GM12878 (cell line): ENCODE measurements at regions of chr7 and their contacts with region 1.

Region 1: DNA sequence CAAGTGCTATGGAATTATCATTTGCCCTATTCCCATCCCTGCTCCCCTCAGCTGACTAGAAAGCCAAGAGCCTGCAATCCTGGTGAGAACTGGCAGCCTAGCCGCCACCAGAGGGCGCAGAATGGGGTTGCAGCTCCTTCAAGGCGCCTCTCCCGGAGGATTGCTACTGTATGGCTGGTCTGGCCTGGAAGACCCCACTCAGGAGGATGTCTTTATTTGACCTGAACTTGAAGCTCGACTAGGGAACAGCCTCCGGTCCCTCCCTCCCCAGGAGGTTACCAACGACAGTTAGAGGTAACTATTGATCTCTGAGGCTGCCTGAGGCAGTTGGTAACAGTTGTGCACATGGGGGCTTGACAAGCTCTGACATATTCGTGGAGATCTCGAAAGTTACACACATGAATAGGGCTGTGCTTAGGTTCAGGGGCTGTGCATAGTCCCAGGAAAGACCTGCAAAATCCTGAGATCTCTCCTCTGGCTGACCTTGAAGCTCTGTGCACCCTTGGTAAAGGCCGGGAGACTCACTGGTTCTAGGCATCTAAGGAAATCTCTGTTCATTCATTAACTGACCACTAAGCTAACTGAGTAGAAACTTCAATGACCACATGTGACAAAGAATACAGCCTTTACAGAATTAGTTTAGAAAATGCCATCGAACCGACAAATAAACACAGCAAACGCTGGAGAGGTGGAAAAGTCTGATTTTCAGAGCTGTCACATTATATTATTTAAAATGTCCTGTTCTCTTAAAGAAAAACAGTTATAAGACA is 65.7 kb downstream of the TSPAN12 start:
- DNase-seq: peak; percentile 24
- ATAC-seq: peak; percentile 96
- H3K4me3 ChIP-seq: no peak overlapping the region
- H3K27ac ChIP-seq: no peak overlapping the region
- H3K4me1 ChIP-seq: no peaks in the 10 kb centered on the region
- H3K27me3 ChIP-seq: no peaks in the 10 kb centered on the region
- CTCF ChIP-seq: peak; percentile 84 to 97 (median 95)
- EP300 ChIP-seq: no peak
- POLR2A ChIP-seq: no peak
- RAD21 ChIP-seq: peak; percentile 70

Region 2: DNA sequence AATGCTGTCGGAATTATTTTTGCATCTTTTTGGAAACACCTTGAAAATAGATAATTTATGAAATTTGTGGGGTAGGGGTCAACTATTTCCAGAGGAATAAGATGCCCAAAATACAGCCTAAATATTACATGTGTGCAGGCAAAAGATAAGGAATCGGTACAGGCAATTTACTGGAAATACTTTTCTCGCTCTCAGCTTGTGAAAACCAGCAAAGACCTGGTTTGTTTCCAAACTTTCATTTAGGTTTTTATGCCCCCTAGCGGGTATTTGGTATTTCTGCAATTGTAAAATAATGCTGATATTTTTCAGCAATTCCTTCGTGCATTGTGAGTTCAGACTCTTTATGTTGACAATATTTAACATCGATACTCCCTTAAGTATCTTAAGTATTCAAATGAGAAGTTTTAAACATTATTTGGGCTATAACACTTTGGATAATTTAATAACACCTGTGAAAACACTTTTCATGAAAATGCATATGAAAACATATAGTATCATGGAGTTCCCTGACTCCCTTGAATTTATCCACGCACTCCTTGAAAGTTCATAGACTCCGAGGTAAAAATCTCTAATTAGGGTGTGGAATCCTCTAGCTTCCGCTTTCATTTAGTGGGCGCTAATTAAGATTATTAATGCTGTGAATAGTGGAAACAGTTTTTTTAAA is 66.8 kb before region 1 on chr7:
- CTCF ChIA-PET with region 1: interaction called, 11 read pairs
- POLR2A ChIA-PET with region 1: no interaction called
- RAD21 ChIA-PET with region 1: no interaction called
- SMC1A ChIA-PET with region 1: interaction called, 4 read pairs
- in situ Hi-C with region 1: no loop called
- intact Hi-C with region 1: no loop called
- DNase-seq: no peak
- ATAC-seq: peak; percentile 54
- H3K4me3 ChIP-seq: no peak overlapping the region
- H3K27ac ChIP-seq: no peak overlapping the region
- H3K4me1 ChIP-seq: no peaks in the 10 kb centered on the region; the same call in 1 of the 2 replicates
- H3K27me3 ChIP-seq: no peaks in the 10 kb centered on the region
- CTCF ChIP-seq: peak; percentile 54 to 59 (median 55); a peak in 5 of 6 replicates
- EP300 ChIP-seq: no peak
- POLR2A ChIP-seq: no peak
- RAD21 ChIP-seq: peak; percentile 87

Region 3: GRCh38 chr7:120819863-120820262 is 27.6 kb after region 1 on chr7:
- CTCF ChIA-PET with region 1: interaction called, 10 read pairs
- POLR2A ChIA-PET with region 1: no interaction called
- RAD21 ChIA-PET with region 1: interaction called, 3 read pairs
- SMC1A ChIA-PET with region 1: interaction called, 8 read pairs
- in situ Hi-C with region 1: no loop called
- intact Hi-C with region 1: no loop called
- DNase-seq: no peak
- ATAC-seq: peak; percentile 68
- H3K4me3 ChIP-seq: no peak overlapping the region
- H3K27ac ChIP-seq: no peak overlapping the region
- H3K4me1 ChIP-seq: no peaks in the 10 kb centered on the region
- H3K27me3 ChIP-seq: no peaks in the 10 kb centered on the region
- CTCF ChIP-seq: peak in 1 of 3 experiments; percentile 58; a peak in 2 of 6 replicates
- EP300 ChIP-seq: no peak
- POLR2A ChIP-seq: no peak
- RAD21 ChIP-seq: peak; percentile 37; the same call in 1 of the 2 replicates

Region 4: GRCh38 chr7:120867932-120868331 is 75.7 kb after region 1 on chr7:
- CTCF ChIA-PET with region 1: interaction called, 18 read pairs
- POLR2A ChIA-PET with region 1: no interaction called
- RAD21 ChIA-PET with region 1: interaction called, 7 read pairs
- SMC1A ChIA-PET with region 1: interaction called, 7 read pairs
- in situ Hi-C with region 1: no loop called
- intact Hi-C with region 1: no loop called
- DNase-seq: no peak
- ATAC-seq: peak; percentile 91
- H3K4me3 ChIP-seq: no peak overlapping the region
- H3K27ac ChIP-seq: no peak overlapping the region
- H3K4me1 ChIP-seq: peaks cover 17% of the 10 kb centered on the region
- H3K27me3 ChIP-seq: no peaks in the 10 kb centered on the region
- CTCF ChIP-seq: no peak
- EP300 ChIP-seq: 0 out of 4 replicates have a peak, but pooled peaks of 1 of the 2 experiments have one; percentile 52
- POLR2A ChIP-seq: no peak
- RAD21 ChIP-seq: no peak

Region 5: DNA sequence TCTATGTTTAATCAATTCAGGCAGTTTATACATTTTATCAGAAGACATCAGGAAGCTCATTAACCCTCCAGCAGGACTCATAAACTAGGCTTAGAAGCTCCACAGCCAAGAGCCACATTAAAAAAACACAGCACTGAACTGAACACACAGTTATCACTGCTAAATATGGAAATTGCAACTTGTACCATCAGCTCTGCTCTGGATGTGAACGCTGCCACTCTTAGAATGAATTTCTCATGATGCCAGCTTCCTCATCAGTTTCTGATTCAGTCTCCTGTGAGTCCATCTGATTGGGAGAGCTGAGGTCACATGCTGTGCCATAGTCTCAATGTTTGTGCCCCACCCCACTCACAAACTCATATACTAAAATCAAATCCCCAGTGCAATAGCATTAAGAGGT is 141.2 kb after region 1 on chr7:
- CTCF ChIA-PET with region 1: interaction called, 21 read pairs
- POLR2A ChIA-PET with region 1: interaction called, 3 read pairs
- RAD21 ChIA-PET with region 1: interaction called, 7 read pairs
- SMC1A ChIA-PET with region 1: interaction called, 17 read pairs
- in situ Hi-C with region 1: loop called (anchors 5 kb)
- intact Hi-C with region 1: no loop called
- DNase-seq: no peak
- ATAC-seq: peak; percentile 80
- H3K4me3 ChIP-seq: no peak overlapping the region
- H3K27ac ChIP-seq: no peak overlapping the region
- H3K4me1 ChIP-seq: no peaks in the 10 kb centered on the region
- H3K27me3 ChIP-seq: no peaks in the 10 kb centered on the region
- CTCF ChIP-seq: no peak
- EP300 ChIP-seq: no peak
- POLR2A ChIP-seq: no peak
- RAD21 ChIP-seq: no peak

Region 6: DNA sequence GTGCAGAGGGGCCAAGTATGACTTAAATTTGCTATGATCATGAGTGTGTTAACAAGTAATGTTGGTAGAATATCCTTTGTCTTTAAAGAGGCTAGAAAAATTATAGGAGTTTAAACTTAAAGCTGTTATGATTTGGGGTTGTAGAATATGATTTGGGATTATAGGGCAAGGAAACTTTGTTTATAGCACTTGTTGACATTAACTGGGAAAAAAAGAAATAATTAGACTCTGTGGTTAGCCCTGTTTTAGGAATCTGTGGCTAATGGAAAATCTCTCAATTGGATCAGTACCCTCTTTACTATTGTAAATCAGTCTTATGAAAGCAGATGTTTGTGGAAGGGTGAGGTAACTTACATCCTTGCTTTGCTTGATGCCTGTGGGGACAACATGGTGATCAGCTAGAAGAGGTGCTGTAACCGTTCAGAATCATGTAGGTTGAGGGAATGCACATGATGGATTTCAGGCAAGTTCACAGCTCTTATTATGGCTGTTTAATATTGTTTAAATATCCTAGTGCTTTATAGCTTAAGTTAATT is 169.4 kb after region 1 on chr7:
- CTCF ChIA-PET with region 1: interaction called, 13 read pairs
- POLR2A ChIA-PET with region 1: no interaction called
- RAD21 ChIA-PET with region 1: interaction called, 3 read pairs
- SMC1A ChIA-PET with region 1: interaction called, 4 read pairs
- in situ Hi-C with region 1: no loop called
- intact Hi-C with region 1: no loop called
- DNase-seq: no peak
- ATAC-seq: peak; percentile 43; the same call in 2 of the 3 replicates
- H3K4me3 ChIP-seq: no peak overlapping the region
- H3K27ac ChIP-seq: no peak overlapping the region
- H3K4me1 ChIP-seq: no peaks in the 10 kb centered on the region
- H3K27me3 ChIP-seq: no peaks in the 10 kb centered on the region
- CTCF ChIP-seq: no peak
- EP300 ChIP-seq: no peak
- POLR2A ChIP-seq: no peak
- RAD21 ChIP-seq: no peak

Region 7: GRCh38 chr7:121107923-121108498 is 315.7 kb after region 1 on chr7:
- CTCF ChIA-PET with region 1: interaction called, 11 read pairs
- POLR2A ChIA-PET with region 1: no interaction called
- RAD21 ChIA-PET with region 1: interaction called, 5 read pairs
- SMC1A ChIA-PET with region 1: interaction called, 5 read pairs
- in situ Hi-C with region 1: no loop called
- intact Hi-C with region 1: no loop called
- DNase-seq: peak; percentile 11
- ATAC-seq: peak; percentile 96
- H3K4me3 ChIP-seq: no peak overlapping the region
- H3K27ac ChIP-seq: no peak overlapping the region
- H3K4me1 ChIP-seq: no peaks in the 10 kb centered on the region
- H3K27me3 ChIP-seq: no peaks in the 10 kb centered on the region; a peak in 2 of 4 replicates
- CTCF ChIP-seq: peak; percentile 65 to 76 (median 74)
- EP300 ChIP-seq: no peak
- POLR2A ChIP-seq: no peak
- RAD21 ChIP-seq: peak; percentile 74

Region 8: DNA sequence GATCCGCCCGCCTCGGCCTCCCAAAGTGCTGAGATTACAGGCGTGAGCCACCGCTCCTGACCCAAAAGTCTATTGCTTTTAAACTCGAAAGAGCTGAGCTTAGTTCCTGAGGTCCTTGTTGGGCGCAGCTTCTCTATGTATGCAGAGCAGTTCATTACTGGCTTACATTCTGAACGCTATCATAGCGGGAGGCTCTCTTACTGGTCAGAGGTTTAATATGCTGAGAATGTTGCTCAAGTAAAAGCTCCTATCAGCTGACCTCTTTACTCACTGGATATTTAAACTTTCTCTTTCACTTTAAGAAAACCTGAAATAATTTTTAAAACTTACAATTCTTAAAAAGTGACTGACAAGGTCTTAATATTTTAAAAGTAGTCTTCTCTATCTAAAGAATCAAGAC is 375.7 kb after region 1 on chr7:
- CTCF ChIA-PET with region 1: no interaction called
- POLR2A ChIA-PET with region 1: no interaction called
- RAD21 ChIA-PET with region 1: no interaction called
- SMC1A ChIA-PET with region 1: no interaction called
- in situ Hi-C with region 1: no loop called
- intact Hi-C with region 1: no loop called
- DNase-seq: no peak
- ATAC-seq: no peak
- H3K4me3 ChIP-seq: no peak overlapping the region
- H3K27ac ChIP-seq: no peak overlapping the region
- H3K4me1 ChIP-seq: no peaks in the 10 kb centered on the region
- H3K27me3 ChIP-seq: no peaks in the 10 kb centered on the region
- CTCF ChIP-seq: no peak
- EP300 ChIP-seq: no peak
- POLR2A ChIP-seq: no peak
- RAD21 ChIP-seq: no peak